Cardiac septum (tissue), 1 donor: ENCODE measurements at regions of chr17 and their contacts with region 1.

Region 1: GRCh38 chr17:8745586-8746500 is 1.2 kb upstream of the CCDC42 start:
- DNase-seq: peak; percentile 84

Region 2: GRCh38 chr17:8383143-8383822 is 362.6 kb before region 1 on chr17 and contains the start of gene RPL26:
- intact Hi-C with region 1: loop called (anchors 10 kb)
- DNase-seq: peak; percentile 96
- total RNA-seq, gene RPL26: 727 TPM

Region 3: DNA sequence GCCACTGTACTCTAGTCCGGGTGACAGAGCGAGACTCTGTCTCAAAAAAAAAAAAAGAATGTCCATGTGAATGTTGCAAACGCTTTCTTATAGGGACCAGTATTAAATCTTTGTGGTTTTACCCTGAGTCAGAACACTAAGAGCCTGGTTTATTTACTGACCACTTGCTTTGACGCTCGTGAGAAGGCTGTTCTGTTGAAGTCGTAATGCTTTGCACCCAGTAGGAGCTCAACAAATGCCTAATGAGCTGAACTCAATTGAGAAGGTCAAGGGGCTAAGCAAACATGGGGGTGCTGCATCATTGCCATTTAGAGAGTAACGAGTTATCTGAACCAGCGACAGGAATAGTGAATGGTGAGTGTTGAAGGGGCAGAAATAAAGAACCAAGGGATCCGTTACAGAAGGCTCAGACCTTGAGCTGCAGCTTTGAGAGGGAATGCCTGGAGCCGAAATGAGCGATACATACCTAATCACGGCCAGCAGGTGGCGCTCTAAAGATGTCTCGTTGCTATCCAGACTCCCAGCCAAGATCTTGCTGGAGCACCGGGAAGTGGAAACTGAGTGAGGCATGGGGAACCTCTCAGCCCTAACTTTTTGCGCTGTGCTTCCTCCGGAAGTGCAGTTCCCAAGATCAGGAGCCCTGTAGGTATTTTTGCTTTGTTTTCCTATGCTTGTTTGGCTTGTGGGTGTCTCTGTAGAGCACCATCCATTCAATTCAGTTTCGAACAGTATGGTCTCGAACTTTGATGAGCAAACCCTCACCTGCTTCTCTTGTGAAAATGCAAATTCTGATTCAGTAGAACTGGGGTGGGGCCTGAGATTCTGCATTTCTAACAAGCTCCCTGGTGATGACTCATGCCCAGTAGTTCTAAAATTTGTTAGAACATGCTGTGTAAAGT is 335.6 kb before region 1 on chr17:
- intact Hi-C with region 1: loop called (anchors 2 kb)
- DNase-seq: peak; percentile 94

Region 4: DNA sequence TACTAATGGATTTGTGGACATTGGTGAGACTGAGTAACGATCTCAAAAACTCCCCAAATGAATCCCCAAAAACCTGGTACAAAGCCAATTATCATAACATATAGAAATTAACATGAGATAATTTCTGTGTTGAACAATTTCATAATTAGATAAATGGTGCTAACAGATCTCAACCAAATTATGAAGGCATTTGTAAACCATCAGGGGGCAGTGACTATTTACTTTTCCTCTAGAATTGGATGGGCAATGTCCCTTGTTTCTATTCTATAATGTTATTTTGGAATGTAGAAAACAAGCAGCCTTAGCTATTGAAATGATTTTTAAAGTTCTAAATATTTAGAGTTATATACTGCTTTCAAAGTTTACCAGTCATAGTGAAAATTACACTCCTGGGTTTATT is 173.1 kb before region 1 on chr17:
- intact Hi-C with region 1: loop called (anchors 2 kb)
- DNase-seq: no peak

Region 5: GRCh38 chr17:8630802-8631553 is 114.9 kb before region 1 on chr17:
- intact Hi-C with region 1: loop called (anchors 5 kb)
- DNase-seq: peak; percentile 99